Activated CD4-positive, alpha-beta T cell treated with anti-CD3 and anti-CD28 coated beads, Interleukin-2, amount 10 ng/mL, durations not matched to agents 24 days and 14 days (primary cell): ENCODE measurements at regions of chr7 and their contacts with region 1.

Region 1: GRCh38 chr7:50397320-50397970 is 52.7 kb downstream of the FIGNL1 start:
- DNase-seq: peak; percentile 87
- H3K4me3 Mint-ChIP-seq: peak overlapping the region; percentile 82
- H3K27ac Mint-ChIP-seq: peak overlapping the region; percentile 97
- H3K4me1 Mint-ChIP-seq: peaks cover 63% of the 10 kb centered on the region
- H3K27me3 Mint-ChIP-seq: no peaks in the 10 kb centered on the region

Region 2: DNA sequence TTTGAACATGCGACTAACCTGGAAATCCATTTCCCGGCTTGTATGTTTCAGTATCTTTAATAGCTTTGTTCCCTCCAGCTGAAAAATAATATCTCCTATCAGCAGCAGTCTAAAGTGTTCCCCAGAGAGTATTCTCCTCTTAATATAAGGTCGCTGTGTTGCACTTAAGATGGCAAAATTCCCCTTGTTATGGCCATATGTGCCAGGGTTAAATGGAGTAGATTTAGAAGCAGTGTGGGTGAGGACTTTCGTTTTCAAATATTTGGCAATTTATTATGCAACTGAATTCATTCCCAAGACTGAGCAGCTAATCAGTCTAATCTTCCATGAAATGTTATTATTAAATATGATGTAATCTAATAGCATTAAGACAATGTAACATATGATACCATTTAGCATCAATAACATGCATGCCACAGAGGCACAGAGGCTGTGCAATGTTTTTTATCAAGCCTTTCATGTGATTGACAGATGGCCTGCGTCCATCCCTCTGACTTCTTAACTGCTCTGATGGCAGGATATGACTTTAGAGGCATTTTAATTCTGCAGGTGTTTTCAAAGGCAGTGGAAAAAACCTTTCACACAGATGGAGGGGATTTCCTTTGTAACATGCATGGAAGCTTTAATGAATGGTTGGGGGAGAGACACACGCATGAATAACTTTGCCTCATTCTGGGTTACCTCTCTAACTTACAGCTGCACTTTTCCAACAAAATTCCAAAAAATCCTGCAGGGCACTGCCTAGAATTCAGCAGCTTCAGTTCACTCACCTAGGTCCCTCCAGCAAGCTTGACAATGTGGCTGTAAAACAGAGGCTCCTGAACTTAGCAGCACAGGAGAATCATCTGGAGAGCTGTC is 249.3 kb before region 1 on chr7:
- intact Hi-C with region 1: loop called (anchors 2 kb)
- DNase-seq: peak; percentile 81
- H3K4me3 Mint-ChIP-seq: peak overlapping the region; percentile 40
- H3K27ac Mint-ChIP-seq: peak overlapping the region; percentile 81
- H3K4me1 Mint-ChIP-seq: peaks cover 61% of the 10 kb centered on the region
- H3K27me3 Mint-ChIP-seq: no peaks in the 10 kb centered on the region

Region 3: GRCh38 chr7:50335795-50336754 is 61.4 kb before region 1 on chr7:
- intact Hi-C with region 1: loop called (anchors 2 kb)
- DNase-seq: peak; percentile 92
- H3K4me3 Mint-ChIP-seq: no peak overlapping the region
- H3K27ac Mint-ChIP-seq: no peak overlapping the region
- H3K4me1 Mint-ChIP-seq: peaks cover 63% of the 10 kb centered on the region
- H3K27me3 Mint-ChIP-seq: no peaks in the 10 kb centered on the region

Region 4: GRCh38 chr7:50369143-50370026 is 28.1 kb before region 1 on chr7:
- intact Hi-C with region 1: loop called (anchors 1 kb)
- DNase-seq: peak; percentile 87
- H3K4me3 Mint-ChIP-seq: peak overlapping the region; percentile 55
- H3K27ac Mint-ChIP-seq: peak overlapping the region; percentile 45
- H3K4me1 Mint-ChIP-seq: peaks cover 85% of the 10 kb centered on the region
- H3K27me3 Mint-ChIP-seq: no peaks in the 10 kb centered on the region

Region 5: DNA sequence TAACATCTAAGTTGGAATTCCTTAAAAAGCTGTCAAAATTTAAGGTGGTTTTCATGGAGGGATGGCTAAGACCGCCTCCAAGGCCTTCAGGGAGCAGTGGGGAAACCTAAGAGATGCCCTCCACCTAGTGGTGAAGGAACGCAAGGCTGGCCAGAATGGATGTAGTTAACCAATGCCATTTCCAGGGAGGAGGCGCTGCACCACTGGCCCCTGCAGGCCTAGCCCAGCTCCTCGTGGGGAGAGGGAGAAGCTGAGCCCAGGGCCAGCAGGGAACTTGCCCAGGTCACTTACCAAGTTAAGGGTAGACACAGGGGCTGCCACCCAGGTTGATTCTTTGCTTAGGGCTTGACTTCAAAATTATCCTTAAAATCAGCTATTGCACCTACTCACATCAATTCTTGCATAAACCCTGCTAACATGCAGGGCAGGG is 20.7 kb after region 1 on chr7:
- intact Hi-C with region 1: loop called (anchors 1 kb)
- DNase-seq: peak; percentile 92
- H3K4me3 Mint-ChIP-seq: no peak overlapping the region
- H3K27ac Mint-ChIP-seq: no peak overlapping the region
- H3K4me1 Mint-ChIP-seq: peaks cover 31% of the 10 kb centered on the region
- H3K27me3 Mint-ChIP-seq: no peaks in the 10 kb centered on the region